Activated CD4-positive, alpha-beta T cell treated with anti-CD3 and anti-CD28 coated beads, Interleukin-2, amount 10 ng/mL, durations not matched to agents 24 days and 14 days (primary cell): ENCODE measurements at regions of chr2 and their contacts with region 1.

Region 1: GRCh38 chr2:160970052-160970965 is 189.9 kb upstream of the TANK start:
- DNase-seq: no peak
- H3K4me3 Mint-ChIP-seq: no peak overlapping the region
- H3K27ac Mint-ChIP-seq: no peak overlapping the region
- H3K4me1 Mint-ChIP-seq: no peaks in the 10 kb centered on the region
- H3K27me3 Mint-ChIP-seq: peaks cover 21% of the 10 kb centered on the region

Region 2: DNA sequence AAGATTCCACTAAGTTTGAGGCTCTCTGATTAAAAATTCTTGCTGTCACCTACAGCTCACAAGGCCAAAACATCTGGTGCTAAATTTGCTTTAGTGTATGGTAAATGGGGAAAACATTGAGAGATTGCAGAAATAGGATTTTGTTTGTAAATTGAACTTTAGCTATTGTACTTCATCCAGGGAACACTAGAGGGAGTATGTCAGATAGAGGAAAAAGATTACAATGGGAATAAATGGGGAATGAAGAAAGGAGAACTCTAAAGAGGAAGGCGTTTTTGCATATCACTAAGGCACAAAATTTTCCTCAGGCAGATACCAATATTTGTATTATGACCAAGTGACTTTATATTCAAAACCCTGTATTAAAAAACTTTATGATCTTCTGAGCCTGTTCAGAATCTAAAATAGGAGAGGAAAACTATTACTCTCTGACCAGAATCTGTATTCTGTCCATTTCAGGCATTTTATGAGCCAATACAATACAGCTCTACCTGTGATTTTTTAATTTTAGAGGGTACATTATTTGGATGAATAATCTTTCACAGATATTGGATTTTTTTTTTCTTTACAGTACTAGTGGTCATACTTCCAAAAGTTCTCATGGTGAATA is 717.9 kb before region 1 on chr2:
- intact Hi-C with region 1: loop called (anchors 1 kb)
- DNase-seq: no peak
- H3K4me3 Mint-ChIP-seq: no peak overlapping the region
- H3K27ac Mint-ChIP-seq: no peak overlapping the region
- H3K4me1 Mint-ChIP-seq: no peaks in the 10 kb centered on the region
- H3K27me3 Mint-ChIP-seq: peaks cover 14% of the 10 kb centered on the region

Region 3: GRCh38 chr2:160338901-160339685 is 631.2 kb before region 1 on chr2:
- intact Hi-C with region 1: loop called (anchors 5 kb)
- DNase-seq: no peak
- H3K4me3 Mint-ChIP-seq: no peak overlapping the region
- H3K27ac Mint-ChIP-seq: no peak overlapping the region
- H3K4me1 Mint-ChIP-seq: peaks cover 36% of the 10 kb centered on the region
- H3K27me3 Mint-ChIP-seq: no peaks in the 10 kb centered on the region

Region 4: GRCh38 chr2:160984426-160985077 is 14.2 kb after region 1 on chr2:
- intact Hi-C with region 1: no loop called
- DNase-seq: no peak
- H3K4me3 Mint-ChIP-seq: no peak overlapping the region
- H3K27ac Mint-ChIP-seq: no peak overlapping the region
- H3K4me1 Mint-ChIP-seq: no peaks in the 10 kb centered on the region
- H3K27me3 Mint-ChIP-seq: peaks cover 23% of the 10 kb centered on the region